T-cell (primary cell): ENCODE measurements at regions of chr12 and their contacts with region 1.

Region 1: GRCh38 chr12:118357257-118358007 is 15.3 kb downstream of the TAOK3 start:
- DNase-seq: peak in 29 of 35 experiments; percentile 20 to 82 (median 46)
- ATAC-seq: peak; percentile 64 to 75 (median 67)
- H3K4me3 ChIP-seq: peak overlapping the region in 1 of 2 donors; percentile 6
- H3K4me3 Mint-ChIP-seq: peak overlapping the region; percentile 62 to 94 (median 87)
- H3K27ac ChIP-seq: peak overlapping the region; percentile 56
- H3K27ac Mint-ChIP-seq: peak overlapping the region; percentile 76 to 79
- H3K4me1 ChIP-seq: peaks cover 17 to 25% of the 10 kb centered on the region in 2 experiments
- H3K4me1 Mint-ChIP-seq: peaks cover 58 to 65% (median 63%) of the 10 kb centered on the region in 3 donors
- H3K27me3 ChIP-seq: no peaks in the 10 kb centered on the region
- H3K27me3 Mint-ChIP-seq: no peaks in the 10 kb centered on the region

Region 2: DNA sequence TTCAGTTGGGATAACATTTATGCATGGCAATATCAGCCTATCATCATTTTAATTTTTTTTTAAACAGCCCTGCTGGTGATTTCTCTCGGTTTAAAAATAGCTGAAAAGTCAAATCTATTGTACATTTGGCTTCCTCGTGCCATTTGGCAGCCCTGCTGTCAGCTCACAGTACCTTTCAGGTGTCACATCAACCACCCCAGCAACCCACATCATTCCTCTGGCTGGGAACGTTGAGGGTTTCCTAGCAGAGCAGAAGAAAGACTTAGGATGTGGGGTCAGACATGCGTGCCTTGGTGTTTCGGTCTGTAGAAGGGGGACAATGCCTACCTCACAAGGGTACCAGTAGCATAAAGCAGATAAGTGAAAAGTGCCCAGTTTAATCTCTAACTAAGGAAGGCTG is 205.7 kb before region 1 on chr12:
- CTCF ChIA-PET with region 1: no interaction called
- POLR2A ChIA-PET with region 1: no interaction called
- DNase-seq: no peak
- ATAC-seq: no peak
- H3K4me3 ChIP-seq: no peak overlapping the region
- H3K4me3 Mint-ChIP-seq: no peak overlapping the region
- H3K27ac ChIP-seq: no peak overlapping the region
- H3K27ac Mint-ChIP-seq: no peak overlapping the region
- H3K4me1 ChIP-seq: no peaks in the 10 kb centered on the region
- H3K4me1 Mint-ChIP-seq: peaks cover 0 to 7% (median 0%) of the 10 kb centered on the region in 3 donors
- H3K27me3 ChIP-seq: no peaks in the 10 kb centered on the region
- H3K27me3 Mint-ChIP-seq: no peaks in the 10 kb centered on the region

Region 3: DNA sequence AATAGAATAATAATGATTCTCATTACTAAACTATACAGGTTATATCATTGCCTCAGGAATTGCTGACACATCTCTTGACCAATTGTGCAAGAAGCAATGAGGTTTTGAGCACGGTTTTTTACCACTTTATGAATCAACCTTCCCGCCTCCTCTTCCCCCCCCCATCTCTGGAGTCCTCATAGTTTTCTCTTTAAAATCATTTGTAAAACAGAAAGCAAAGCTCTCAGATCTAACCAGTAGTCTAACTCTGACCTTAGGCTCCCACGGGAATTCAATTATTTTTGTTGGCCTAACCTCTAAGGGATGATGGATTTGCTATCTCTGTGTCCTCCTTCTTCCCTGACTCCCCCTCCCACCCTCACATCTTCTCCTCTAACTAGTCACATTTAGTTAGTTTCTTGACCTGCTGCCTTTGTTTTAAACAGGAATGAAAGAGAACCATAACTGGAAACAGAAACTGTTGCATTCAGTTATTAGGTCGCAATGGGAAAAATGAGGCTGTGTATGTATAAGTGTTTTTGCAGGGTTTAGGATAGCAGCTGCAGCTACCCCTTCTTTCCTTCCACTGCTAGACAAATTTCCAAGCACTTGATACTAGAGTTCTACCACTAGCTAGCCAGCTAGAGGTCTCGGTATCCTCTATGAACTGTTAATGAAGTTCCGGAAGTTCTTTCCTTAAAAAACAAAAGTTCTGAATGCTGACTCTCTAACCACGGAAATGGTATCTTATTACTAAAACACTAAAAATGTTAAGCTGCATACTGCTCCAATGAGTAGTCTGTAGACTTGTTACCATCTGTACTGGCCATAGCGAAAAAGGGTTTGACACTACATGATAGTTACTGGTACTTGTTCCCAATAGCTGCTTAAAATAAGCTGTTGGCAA is 50.1 kb before region 1 on chr12:
- CTCF ChIA-PET with region 1: interaction called in 1 of 2 experiments, 4 read pairs
- POLR2A ChIA-PET with region 1: interaction called in 1 of 2 experiments, 10 read pairs
- DNase-seq: peak in 1 of 35 experiments; percentile 3
- ATAC-seq: peak in 2 of 4 experiments; percentile 24 to 26
- H3K4me3 ChIP-seq: no peak overlapping the region
- H3K4me3 Mint-ChIP-seq: peak overlapping the region; percentile 10 to 23 (median 22)
- H3K27ac ChIP-seq: no peak overlapping the region
- H3K27ac Mint-ChIP-seq: peak overlapping the region in 1 of 2 donors; percentile 24
- H3K4me1 ChIP-seq: peaks cover 0 to 4% of the 10 kb centered on the region in 2 experiments
- H3K4me1 Mint-ChIP-seq: peaks cover 40 to 48% (median 42%) of the 10 kb centered on the region in 3 donors
- H3K27me3 ChIP-seq: no peaks in the 10 kb centered on the region
- H3K27me3 Mint-ChIP-seq: no peaks in the 10 kb centered on the region

Region 4: GRCh38 chr12:118330421-118331018 is 26.9 kb before region 1 on chr12:
- CTCF ChIA-PET with region 1: interaction called in 1 of 2 experiments, 10 read pairs
- POLR2A ChIA-PET with region 1: no interaction called
- DNase-seq: no peak
- ATAC-seq: no peak
- H3K4me3 ChIP-seq: no peak overlapping the region
- H3K4me3 Mint-ChIP-seq: no peak overlapping the region
- H3K27ac ChIP-seq: no peak overlapping the region
- H3K27ac Mint-ChIP-seq: peak overlapping the region in 1 of 2 donors; percentile 74
- H3K4me1 ChIP-seq: peaks cover 0 to 6% of the 10 kb centered on the region in 2 experiments
- H3K4me1 Mint-ChIP-seq: peaks cover 46 to 57% (median 51%) of the 10 kb centered on the region in 3 donors
- H3K27me3 ChIP-seq: no peaks in the 10 kb centered on the region
- H3K27me3 Mint-ChIP-seq: no peaks in the 10 kb centered on the region

Region 5: DNA sequence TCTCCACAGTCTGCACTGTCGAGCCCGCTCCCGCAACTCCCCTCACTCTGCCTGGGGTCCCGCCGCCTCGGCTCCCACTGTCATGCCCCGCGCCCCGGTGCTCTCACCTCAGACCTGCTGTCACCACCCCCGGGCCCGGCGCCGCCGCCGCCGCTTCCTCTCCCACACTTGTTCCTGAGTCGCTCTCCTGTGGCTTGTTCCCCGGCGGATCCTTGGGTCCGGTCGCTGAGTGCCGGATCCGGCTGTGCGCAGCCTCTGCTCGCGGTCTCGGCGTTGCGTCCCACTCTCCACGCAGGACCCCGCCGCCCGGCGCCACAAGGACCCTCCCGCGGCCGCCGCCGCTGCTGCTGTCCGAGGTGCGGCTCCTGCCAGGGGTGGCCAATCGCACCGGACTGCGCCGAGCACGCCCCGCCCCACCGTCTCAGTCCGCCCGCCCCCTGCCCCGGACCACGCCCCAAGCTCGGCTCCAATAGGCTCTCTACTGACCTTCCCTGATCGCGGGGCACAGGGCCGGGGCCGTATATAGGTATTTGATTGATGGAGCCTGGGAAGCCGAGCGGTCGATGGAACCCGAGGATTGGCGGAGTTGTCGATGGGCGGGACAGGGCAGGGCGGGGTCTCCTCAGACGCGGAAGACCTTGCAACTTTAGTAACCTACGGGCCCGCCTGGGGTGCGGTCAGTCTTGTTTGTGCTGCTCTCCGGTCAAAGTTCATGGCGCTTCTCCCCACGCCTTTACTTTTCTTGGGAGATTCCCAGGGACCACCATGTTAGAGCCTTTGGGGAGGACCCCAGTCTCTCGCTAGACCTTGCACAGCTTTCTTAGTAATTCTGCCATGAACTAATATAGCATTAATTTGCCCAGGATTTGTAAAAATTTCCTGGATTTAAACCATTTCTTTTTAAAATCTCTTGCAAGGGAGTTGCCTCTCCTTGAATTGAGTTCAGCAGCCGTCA is 15.4 kb after region 1 on chr12 and contains the start of gene TAOK3:
- CTCF ChIA-PET with region 1: interaction called, 22 to 64 read pairs
- POLR2A ChIA-PET with region 1: interaction called, 3 to 8 read pairs
- DNase-seq: peak; percentile 91 to 98 (median 96)
- ATAC-seq: peak; percentile 85 to 88 (median 86)
- H3K4me3 ChIP-seq: peak within 1 kb of the TSS; percentile 91 to 97
- H3K4me3 Mint-ChIP-seq: peak within 1 kb of the TSS; percentile 91 to 96 (median 92)
- H3K27ac ChIP-seq: peak within 1 kb of the TSS; percentile 88
- H3K27ac Mint-ChIP-seq: peak within 1 kb of the TSS; percentile 97 to 98
- H3K4me1 ChIP-seq: peaks cover 26 to 36% of the 10 kb centered on the region in 2 experiments
- H3K4me1 Mint-ChIP-seq: peaks cover 53 to 61% (median 59%) of the 10 kb centered on the region in 3 donors
- H3K27me3 ChIP-seq: no peaks in the 10 kb centered on the region
- H3K27me3 Mint-ChIP-seq: no peaks in the 10 kb centered on the region
- total RNA-seq, gene TAOK3: 58.7 to 93.6 (median 67.4) TPM

Region 6: GRCh38 chr12:119964929-119965328 is 1607.5 kb after region 1 on chr12:
- CTCF ChIA-PET with region 1: no interaction called
- POLR2A ChIA-PET with region 1: interaction called in 1 of 2 experiments, 12 read pairs
- DNase-seq: no peak
- ATAC-seq: no peak
- H3K4me3 ChIP-seq: no peak overlapping the region
- H3K4me3 Mint-ChIP-seq: no peak overlapping the region
- H3K27ac ChIP-seq: no peak overlapping the region
- H3K27ac Mint-ChIP-seq: no peak overlapping the region
- H3K4me1 ChIP-seq: no peaks in the 10 kb centered on the region
- H3K4me1 Mint-ChIP-seq: peaks cover 0 to 2% (median 0%) of the 10 kb centered on the region in 3 donors
- H3K27me3 ChIP-seq: no peaks in the 10 kb centered on the region
- H3K27me3 Mint-ChIP-seq: no peaks in the 10 kb centered on the region